ENCODE measurements at regions of chr14 and their contacts with region 1.

Region 1: GRCh38 chr14:97266653-97267052 is 469.5 kb downstream of the VRK1 start:
- DNase-seq: no peak

Region 2: GRCh38 chr14:97287956-97288355 is 21.3 kb after region 1 on chr14:
- intact Hi-C with region 1: loop called in 1 of 2 experiments (anchors 2 kb)
- DNase-seq: no peak